Colonic mucosa (tissue), 4 donors: ENCODE measurements at regions of chrX and their contacts with region 1.

Region 1: DNA sequence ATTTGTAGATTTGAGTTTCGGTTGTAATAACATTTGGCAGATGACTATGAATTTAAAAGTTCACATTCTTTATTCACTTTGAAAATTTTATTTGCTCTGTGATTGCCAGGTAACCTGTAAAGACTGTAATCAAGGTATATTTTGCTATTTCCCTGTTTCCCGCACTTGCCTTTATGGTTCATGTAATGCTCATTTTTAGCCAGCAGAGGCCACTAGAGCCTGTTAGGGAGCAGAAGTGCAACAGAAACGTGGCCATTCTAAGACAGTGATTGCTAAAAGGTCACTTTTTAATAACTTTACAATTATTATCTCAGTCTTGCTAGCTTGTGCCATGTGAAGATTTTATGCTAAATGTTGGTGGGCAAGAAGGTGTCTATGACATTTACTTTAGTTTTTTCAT is 12.4 kb downstream of the YIPF6 start:
- DNase-seq: peak; percentile 65
- H3K4me3 ChIP-seq: no peak overlapping the region
- H3K27ac ChIP-seq: no peak overlapping the region
- H3K4me1 ChIP-seq: no peaks in the 10 kb centered on the region
- H3K27me3 ChIP-seq: no peaks in the 10 kb centered on the region
- CTCF ChIP-seq: peak; percentile 84

Region 2: GRCh38 chrX:68710870-68711576 is 199.8 kb after region 1 on chrX:
- intact Hi-C with region 1: loop called (anchors 5 kb)
- DNase-seq: no peak
- H3K4me3 ChIP-seq: no peak overlapping the region
- H3K27ac ChIP-seq: no peak overlapping the region
- H3K4me1 ChIP-seq: no peaks in the 10 kb centered on the region
- H3K27me3 ChIP-seq: no peaks in the 10 kb centered on the region
- CTCF ChIP-seq: peak; percentile 35

Region 3: GRCh38 chrX:68743754-68744153 is 232.5 kb after region 1 on chrX:
- intact Hi-C with region 1: no loop called
- DNase-seq: no peak
- H3K4me3 ChIP-seq: no peak overlapping the region
- H3K27ac ChIP-seq: no peak overlapping the region
- H3K4me1 ChIP-seq: no peaks in the 10 kb centered on the region
- H3K27me3 ChIP-seq: no peaks in the 10 kb centered on the region
- CTCF ChIP-seq: no peak

Region 4: DNA sequence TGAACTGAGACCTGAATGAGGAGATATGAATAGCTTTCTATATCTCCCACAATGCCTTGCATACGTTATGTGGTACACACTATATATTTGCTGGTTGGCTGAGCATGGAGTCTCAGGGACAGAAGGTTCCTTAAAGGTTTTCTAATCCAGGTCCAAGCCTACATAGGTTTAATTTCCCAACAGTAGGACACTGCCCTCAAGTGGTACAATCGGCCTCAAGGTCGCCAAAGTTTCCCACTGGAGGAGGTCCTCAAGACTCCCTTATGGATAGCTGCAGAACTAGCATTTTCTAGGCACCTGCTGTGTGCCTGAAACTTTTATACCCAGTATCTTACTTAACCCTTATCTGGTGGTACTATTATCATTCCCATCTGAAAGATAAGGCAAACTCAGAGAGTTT is 296.6 kb after region 1 on chrX:
- intact Hi-C with region 1: loop called (anchors 10 kb)
- DNase-seq: no peak
- H3K4me3 ChIP-seq: no peak overlapping the region
- H3K27ac ChIP-seq: no peak overlapping the region
- H3K4me1 ChIP-seq: no peaks in the 10 kb centered on the region
- H3K27me3 ChIP-seq: no peaks in the 10 kb centered on the region
- CTCF ChIP-seq: no peak